ENCODE measurements at regions of chr10 and their contacts with region 1.

Region 1: DNA sequence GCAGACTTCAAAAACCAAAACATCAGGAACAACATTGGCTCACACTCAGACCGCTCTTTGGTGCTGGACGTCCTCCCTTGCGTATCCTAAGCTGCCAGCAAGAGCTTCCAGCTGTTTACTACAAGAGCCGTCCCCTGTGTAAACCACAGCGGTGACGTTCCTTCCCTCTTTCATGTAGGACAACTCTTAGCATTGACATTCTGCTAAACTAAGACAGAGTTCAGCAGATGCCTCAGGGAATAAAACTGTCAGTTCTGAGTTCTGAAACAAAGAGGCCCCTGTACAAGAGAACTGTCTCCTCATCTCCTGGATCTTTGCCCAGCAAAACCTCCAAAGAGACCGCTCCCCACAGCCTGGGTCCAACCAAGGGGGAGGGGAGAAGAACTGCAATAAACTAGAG is 57.8 kb upstream of the OPALIN start:
- DNase-seq: no peak
- ATAC-seq: no peak
- H3K4me3 ChIP-seq: no peak overlapping the region
- H3K27ac ChIP-seq: no peak overlapping the region
- H3K4me1 ChIP-seq: no peaks in the 10 kb centered on the region
- CTCF ChIP-seq: no peak
- EP300 ChIP-seq: no peak
- POLR2A ChIP-seq: no peak
- RAD21 ChIP-seq: no peak

Region 2: GRCh38 chr10:96339957-96340904 is 76.4 kb before region 1 on chr10:
- CTCF ChIA-PET with region 1: no interaction called
- POLR2A ChIA-PET with region 1: no interaction called
- DNase-seq: peak; percentile 36 to 71
- ATAC-seq: peak; percentile 67 to 93; a peak in 4 of 6 replicates
- H3K4me3 ChIP-seq: no peak overlapping the region
- H3K27ac ChIP-seq: no peak overlapping the region
- H3K4me1 ChIP-seq: no peaks in the 10 kb centered on the region
- CTCF ChIP-seq: peak; percentile 61
- EP300 ChIP-seq: no peak
- POLR2A ChIP-seq: no peak
- RAD21 ChIP-seq: peak; percentile 39 to 58; a peak in 3 of 5 replicates

Region 3: DNA sequence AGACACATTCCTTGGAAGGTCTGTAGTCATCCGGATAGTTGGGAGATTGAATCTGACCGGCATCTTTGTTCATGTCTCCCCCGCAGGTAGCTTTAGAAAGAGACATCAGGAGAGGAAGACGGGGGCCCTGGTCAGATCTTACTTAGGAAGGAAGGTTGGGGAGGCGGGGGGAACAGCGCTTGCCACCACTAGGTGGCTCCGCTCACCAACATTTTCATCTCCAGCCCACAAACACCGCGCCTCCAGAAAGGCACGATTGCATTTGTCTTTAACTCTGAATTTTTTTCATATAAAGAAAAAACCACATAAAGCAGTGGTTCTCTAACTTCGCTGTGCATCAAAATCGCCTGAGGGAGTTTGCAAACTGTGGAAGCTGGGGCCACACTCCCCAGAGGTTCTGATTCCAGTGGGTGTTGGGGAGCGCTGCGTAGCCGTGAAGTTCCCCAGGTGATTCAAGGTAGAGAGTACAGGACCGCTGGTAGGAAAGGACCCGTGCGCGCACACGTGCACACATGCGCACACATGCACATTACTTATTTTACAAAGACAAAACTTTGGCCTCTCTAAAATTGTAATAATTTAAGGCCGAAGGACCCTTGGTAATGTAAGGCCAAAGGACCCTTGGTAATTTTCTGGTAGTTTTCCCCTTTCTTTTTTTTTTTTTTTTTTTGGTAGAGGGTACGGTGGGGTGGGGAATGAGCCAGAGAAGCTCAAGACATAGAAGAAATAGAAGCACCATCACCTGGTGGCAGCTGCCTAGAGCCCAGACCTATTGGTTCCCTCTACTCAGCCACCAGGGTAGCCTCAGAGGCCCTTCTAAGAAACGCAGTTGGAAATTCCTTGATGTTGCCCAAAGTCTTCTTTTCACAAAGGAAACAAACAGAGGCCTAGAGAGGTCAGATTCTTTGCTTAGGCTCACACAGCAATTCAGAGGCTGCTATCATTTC is 20.4 kb before region 1 on chr10:
- CTCF ChIA-PET with region 1: interaction called, 43 read pairs
- POLR2A ChIA-PET with region 1: no interaction called
- DNase-seq: peak; percentile 73 to 91
- ATAC-seq: peak; percentile 91 to 96
- H3K4me3 ChIP-seq: no peak overlapping the region
- H3K27ac ChIP-seq: no peak overlapping the region
- H3K4me1 ChIP-seq: no peaks in the 10 kb centered on the region
- CTCF ChIP-seq: peak; percentile 83
- EP300 ChIP-seq: no peak
- POLR2A ChIP-seq: no peak
- RAD21 ChIP-seq: peak; percentile 89 to 90

Region 4: DNA sequence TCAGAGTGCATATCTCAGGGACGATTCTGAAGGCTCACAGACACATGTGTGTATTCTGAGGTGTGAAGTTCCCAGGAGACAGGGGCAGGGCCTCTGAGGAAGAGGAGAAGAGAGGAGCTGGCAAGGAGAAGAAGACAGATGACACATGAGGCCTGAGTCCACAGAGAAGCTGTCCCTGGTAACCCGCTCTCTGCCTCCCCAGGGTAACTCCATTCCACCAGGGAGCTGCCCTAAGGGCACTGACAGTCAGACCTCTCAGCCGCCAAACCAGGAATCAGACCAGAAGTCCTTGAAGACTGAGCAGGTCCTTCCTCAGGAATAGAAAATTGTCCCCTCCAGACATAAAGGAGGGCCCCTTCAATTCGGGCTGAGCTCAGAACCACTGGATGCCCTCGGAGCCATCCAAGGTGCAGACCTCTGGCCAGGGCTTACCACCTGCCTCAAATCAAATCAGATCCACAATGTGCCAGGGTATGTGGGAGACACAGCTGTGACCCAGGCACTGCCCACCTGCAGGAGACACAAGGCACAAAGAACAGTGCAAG is 39.7 kb after region 1 on chr10:
- CTCF ChIA-PET with region 1: no interaction called
- POLR2A ChIA-PET with region 1: no interaction called
- DNase-seq: no peak
- ATAC-seq: no peak; a peak in 1 of 6 replicates
- H3K4me3 ChIP-seq: no peak overlapping the region
- H3K27ac ChIP-seq: no peak overlapping the region
- H3K4me1 ChIP-seq: no peaks in the 10 kb centered on the region
- CTCF ChIP-seq: no peak
- EP300 ChIP-seq: no peak
- POLR2A ChIP-seq: no peak
- RAD21 ChIP-seq: no peak

Measured in A549 (cell line).